HepG2 (cell line): ENCODE measurements at regions of chr9 and their contacts with region 1.

Region 1: GRCh38 chr9:73023025-73023541 is 70.2 kb upstream of the ALDH1A1 start:
- DNase-seq: peak; percentile 75
- ATAC-seq: peak; percentile 69
- H3K4me3 ChIP-seq: no peak overlapping the region
- H3K27ac ChIP-seq: no peak overlapping the region
- H3K4me1 ChIP-seq: peaks cover 16% of the 10 kb centered on the region
- H3K27me3 ChIP-seq: no peaks in the 10 kb centered on the region
- CTCF ChIP-seq: peak; percentile 89
- EP300 ChIP-seq: no peak
- POLR2A ChIP-seq: no peak
- RAD21 ChIP-seq: peak; percentile 89

Region 2: GRCh38 chr9:72856972-72857623 is 166.0 kb before region 1 on chr9:
- CTCF ChIA-PET with region 1: interaction called, 12 read pairs
- POLR2A ChIA-PET with region 1: interaction called, 12 read pairs
- in situ Hi-C with region 1: loop called (anchors 10 kb)
- intact Hi-C with region 1: loop called (anchors 5 kb)
- DNase-seq: peak; percentile 65
- ATAC-seq: no peak
- H3K4me3 ChIP-seq: no peak overlapping the region
- H3K27ac ChIP-seq: peak overlapping the region; percentile 99
- H3K4me1 ChIP-seq: peaks cover 30% of the 10 kb centered on the region
- H3K27me3 ChIP-seq: no peaks in the 10 kb centered on the region
- CTCF ChIP-seq: peak; percentile 70
- EP300 ChIP-seq: no peak
- POLR2A ChIP-seq: no peak
- RAD21 ChIP-seq: peak; percentile 43; the same call in 1 of the 2 replicates

Region 3: GRCh38 chr9:72871685-72872084 is 151.4 kb before region 1 on chr9:
- CTCF ChIA-PET with region 1: interaction called, 18 read pairs
- POLR2A ChIA-PET with region 1: no interaction called
- in situ Hi-C with region 1: no loop called
- intact Hi-C with region 1: loop called (anchors 1 kb)
- DNase-seq: peak; percentile 16
- ATAC-seq: no peak
- H3K4me3 ChIP-seq: no peak overlapping the region
- H3K27ac ChIP-seq: no peak overlapping the region
- H3K4me1 ChIP-seq: peaks cover 29% of the 10 kb centered on the region
- H3K27me3 ChIP-seq: no peaks in the 10 kb centered on the region
- CTCF ChIP-seq: peak; percentile 60
- EP300 ChIP-seq: no peak
- POLR2A ChIP-seq: no peak
- RAD21 ChIP-seq: peak; percentile 25; the same call in 1 of the 2 replicates

Region 4: DNA sequence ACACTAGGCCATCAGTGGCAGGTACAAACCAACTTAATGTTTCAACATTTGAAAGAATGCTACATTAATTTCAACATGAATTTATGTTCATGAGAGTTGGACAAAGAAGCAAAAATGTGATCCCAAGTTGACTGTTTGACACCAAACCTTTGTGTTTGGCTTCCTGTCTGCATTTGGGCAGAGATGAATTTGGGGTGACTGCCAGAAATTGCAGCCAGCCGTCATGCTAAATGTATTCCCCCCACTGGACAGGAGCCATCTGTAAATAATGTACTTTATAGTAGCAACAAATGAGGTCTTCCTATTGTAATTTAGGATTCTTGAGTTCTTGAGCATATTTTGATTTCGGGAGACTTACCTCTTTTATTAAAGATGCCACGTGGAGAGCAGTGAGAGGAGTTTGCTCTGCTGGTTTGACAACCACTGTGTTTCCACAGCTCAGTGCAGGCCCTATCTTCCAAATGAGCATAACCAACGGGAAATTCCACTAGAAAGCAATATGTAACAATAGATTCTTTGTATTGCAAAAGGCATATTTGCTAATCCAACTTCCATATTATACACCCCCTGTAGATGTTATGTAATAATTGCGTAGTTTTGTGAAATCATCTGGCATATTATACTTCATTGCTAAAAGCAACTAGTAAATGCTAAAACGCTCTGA is 97.8 kb before region 1 on chr9:
- CTCF ChIA-PET with region 1: no interaction called
- POLR2A ChIA-PET with region 1: no interaction called
- in situ Hi-C with region 1: no loop called
- intact Hi-C with region 1: loop called (anchors 1 kb)
- DNase-seq: peak; percentile 79
- ATAC-seq: peak; percentile 83
- H3K4me3 ChIP-seq: no peak overlapping the region
- H3K27ac ChIP-seq: peak overlapping the region; percentile 36
- H3K4me1 ChIP-seq: peaks cover 20% of the 10 kb centered on the region
- H3K27me3 ChIP-seq: no peaks in the 10 kb centered on the region
- CTCF ChIP-seq: no peak
- EP300 ChIP-seq: peak in 1 of 2 experiments; percentile 64; a peak in 2 of 4 replicates
- POLR2A ChIP-seq: no peak
- RAD21 ChIP-seq: no peak

Region 5: GRCh38 chr9:72952914-72953313 is 70.2 kb before region 1 on chr9 and contains the start of gene ALDH1A1:
- CTCF ChIA-PET with region 1: no interaction called
- POLR2A ChIA-PET with region 1: no interaction called
- in situ Hi-C with region 1: no loop called
- intact Hi-C with region 1: loop called (anchors 1 kb)
- DNase-seq: peak; percentile 68
- ATAC-seq: peak; percentile 75
- H3K4me3 ChIP-seq: peak within 1 kb of the TSS; percentile 63 to 86 (median 64)
- H3K27ac ChIP-seq: peak within 1 kb of the TSS; percentile 75
- H3K4me1 ChIP-seq: peaks cover 40% of the 10 kb centered on the region
- H3K27me3 ChIP-seq: no peaks in the 10 kb centered on the region
- CTCF ChIP-seq: no peak
- EP300 ChIP-seq: no peak
- POLR2A ChIP-seq: peak; percentile 74 to 86
- RAD21 ChIP-seq: no peak
- total RNA-seq, gene ALDH1A1: 439 and 686 TPM in 2 replicates

Region 6: DNA sequence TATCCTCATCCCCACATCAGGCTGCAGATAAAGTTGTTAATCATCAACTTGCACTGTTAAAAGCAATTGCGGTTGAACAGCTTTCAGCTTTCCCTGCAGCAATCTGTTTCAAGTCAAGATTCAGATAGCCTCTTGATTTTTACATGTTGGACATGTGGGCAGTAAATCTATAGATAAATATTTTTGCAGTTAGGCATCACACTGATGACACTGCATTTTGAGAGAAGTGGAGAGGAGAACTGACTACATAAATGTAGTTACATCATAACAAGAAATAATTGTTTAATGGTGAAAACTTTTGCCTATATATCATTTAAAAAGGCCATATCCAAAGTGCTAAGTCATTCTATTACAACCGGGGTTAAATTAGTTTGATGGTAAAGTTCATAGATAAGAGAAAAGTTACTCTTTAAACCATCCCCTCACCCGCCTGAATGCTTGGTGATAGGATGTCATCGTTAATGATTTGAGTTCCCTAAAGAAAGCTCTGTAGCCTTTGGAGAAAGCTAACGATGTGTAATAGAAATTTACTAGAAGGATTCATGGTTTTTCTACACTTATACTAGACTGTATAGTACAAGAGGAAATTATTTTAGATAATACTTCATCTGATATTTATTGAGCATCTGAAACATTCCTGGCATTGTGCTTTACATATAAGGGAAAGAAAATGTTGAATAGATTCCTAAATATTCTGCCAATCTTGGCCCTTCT is 39.4 kb before region 1 on chr9:
- CTCF ChIA-PET with region 1: no interaction called
- POLR2A ChIA-PET with region 1: interaction called, 7 read pairs
- in situ Hi-C with region 1: no loop called
- intact Hi-C with region 1: loop called (anchors 2 kb)
- DNase-seq: peak; percentile 87
- ATAC-seq: peak; percentile 90
- H3K4me3 ChIP-seq: peak overlapping the region in 2 of 3 experiments; percentile 40; a peak in 2 of 6 replicates
- H3K27ac ChIP-seq: peak overlapping the region; percentile 99
- H3K4me1 ChIP-seq: peaks cover 78% of the 10 kb centered on the region
- H3K27me3 ChIP-seq: no peaks in the 10 kb centered on the region
- CTCF ChIP-seq: no peak
- EP300 ChIP-seq: peak in 1 of 2 experiments; percentile 71; a peak in 2 of 4 replicates
- POLR2A ChIP-seq: peak in 1 of 2 experiments; percentile 54; a peak in 1 of 4 replicates
- RAD21 ChIP-seq: no peak

Region 7: DNA sequence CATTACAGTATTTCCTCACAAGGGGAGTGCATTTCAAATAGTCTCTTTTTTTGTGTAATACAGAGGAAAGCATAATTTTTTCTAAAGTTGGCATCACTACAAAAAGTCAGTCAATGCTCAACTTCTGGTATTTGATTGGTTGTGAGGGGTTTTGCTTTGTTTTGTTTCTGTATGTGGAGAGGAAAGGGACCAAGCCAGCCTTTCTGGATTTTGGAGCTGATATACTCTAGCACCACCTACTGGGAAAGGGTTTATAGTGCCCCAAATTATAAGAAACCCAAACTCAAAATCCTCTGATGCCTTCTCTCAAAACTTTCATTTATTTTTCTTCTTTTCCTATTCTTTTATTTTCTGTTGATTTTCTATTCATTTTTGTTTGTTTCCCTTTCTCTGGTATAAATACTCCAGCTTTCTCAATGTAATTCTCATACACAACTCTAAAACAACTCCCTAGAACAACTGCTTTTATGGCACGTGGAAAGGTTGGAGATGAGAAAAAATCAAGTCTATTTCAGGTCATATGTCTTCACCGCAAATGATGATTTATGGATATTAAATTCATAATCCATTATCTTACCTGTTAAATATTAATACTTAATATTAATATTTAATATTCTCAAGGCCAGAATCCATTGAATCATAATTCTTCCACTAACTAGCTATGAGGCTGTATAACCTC is 59.0 kb after region 1 on chr9:
- CTCF ChIA-PET with region 1: interaction called, 4 read pairs
- POLR2A ChIA-PET with region 1: no interaction called
- in situ Hi-C with region 1: no loop called
- intact Hi-C with region 1: loop called (anchors 5 kb)
- DNase-seq: peak; percentile 62
- ATAC-seq: peak; percentile 69
- H3K4me3 ChIP-seq: no peak overlapping the region
- H3K27ac ChIP-seq: no peak overlapping the region
- H3K4me1 ChIP-seq: peaks cover 6% of the 10 kb centered on the region
- H3K27me3 ChIP-seq: 0 out of 5 replicates have a peak, but pooled peaks cover 0 to 3% of the 10 kb centered on the region in 2 experiments
- CTCF ChIP-seq: peak; percentile 74
- EP300 ChIP-seq: no peak
- POLR2A ChIP-seq: no peak
- RAD21 ChIP-seq: peak; percentile 78